SK-N-SH (cell line): ENCODE measurements at regions of chr1 and their contacts with region 1.

Region 1: GRCh38 chr1:20212685-20213331 is 26.5 kb upstream of the PLA2G2C start:
- DNase-seq: peak; percentile 82
- H3K4me3 ChIP-seq: no peak overlapping the region; a peak in 1 of 4 replicates
- H3K27ac ChIP-seq: no peak overlapping the region
- H3K4me1 ChIP-seq: peaks cover 0 to 11% of the 10 kb centered on the region in 2 experiments; a peak in 1 of 4 replicates
- H3K27me3 ChIP-seq: peaks cover 24% of the 10 kb centered on the region
- CTCF ChIP-seq: peak; percentile 84
- EP300 ChIP-seq: no peak
- RAD21 ChIP-seq: peak; percentile 82

Region 2: GRCh38 chr1:20051218-20051829 is 161.5 kb before region 1 on chr1:
- CTCF ChIA-PET with region 1: no interaction called
- POLR2A ChIA-PET with region 1: no interaction called
- DNase-seq: no peak
- H3K4me3 ChIP-seq: no peak overlapping the region
- H3K27ac ChIP-seq: no peak overlapping the region
- H3K4me1 ChIP-seq: no peaks in the 10 kb centered on the region
- H3K27me3 ChIP-seq: no peaks in the 10 kb centered on the region
- CTCF ChIP-seq: no peak
- EP300 ChIP-seq: no peak
- RAD21 ChIP-seq: no peak

Region 3: GRCh38 chr1:20194757-20195461 is 17.9 kb before region 1 on chr1:
- CTCF ChIA-PET with region 1: interaction called, 21 read pairs
- POLR2A ChIA-PET with region 1: no interaction called
- DNase-seq: peak; percentile 57
- H3K4me3 ChIP-seq: peak overlapping the region in 1 of 2 experiments; percentile 49; a peak in 1 of 4 replicates
- H3K27ac ChIP-seq: no peak overlapping the region
- H3K4me1 ChIP-seq: no peaks in the 10 kb centered on the region; a peak in 1 of 4 replicates
- H3K27me3 ChIP-seq: peaks cover 12% of the 10 kb centered on the region; the same call in 1 of the 2 replicates
- CTCF ChIP-seq: peak; percentile 69
- EP300 ChIP-seq: no peak
- RAD21 ChIP-seq: peak; percentile 45

Region 4: GRCh38 chr1:20233394-20233793 is 20.6 kb after region 1 on chr1:
- CTCF ChIA-PET with region 1: interaction called, 23 read pairs
- POLR2A ChIA-PET with region 1: no interaction called
- DNase-seq: peak; percentile 55
- H3K4me3 ChIP-seq: no peak overlapping the region
- H3K27ac ChIP-seq: no peak overlapping the region
- H3K4me1 ChIP-seq: peaks cover 0 to 13% of the 10 kb centered on the region in 2 experiments; a peak in 2 of 4 replicates
- H3K27me3 ChIP-seq: peaks cover 12% of the 10 kb centered on the region; the same call in 1 of the 2 replicates
- CTCF ChIP-seq: peak; percentile 52
- EP300 ChIP-seq: no peak
- RAD21 ChIP-seq: peak; percentile 55

Region 5: DNA sequence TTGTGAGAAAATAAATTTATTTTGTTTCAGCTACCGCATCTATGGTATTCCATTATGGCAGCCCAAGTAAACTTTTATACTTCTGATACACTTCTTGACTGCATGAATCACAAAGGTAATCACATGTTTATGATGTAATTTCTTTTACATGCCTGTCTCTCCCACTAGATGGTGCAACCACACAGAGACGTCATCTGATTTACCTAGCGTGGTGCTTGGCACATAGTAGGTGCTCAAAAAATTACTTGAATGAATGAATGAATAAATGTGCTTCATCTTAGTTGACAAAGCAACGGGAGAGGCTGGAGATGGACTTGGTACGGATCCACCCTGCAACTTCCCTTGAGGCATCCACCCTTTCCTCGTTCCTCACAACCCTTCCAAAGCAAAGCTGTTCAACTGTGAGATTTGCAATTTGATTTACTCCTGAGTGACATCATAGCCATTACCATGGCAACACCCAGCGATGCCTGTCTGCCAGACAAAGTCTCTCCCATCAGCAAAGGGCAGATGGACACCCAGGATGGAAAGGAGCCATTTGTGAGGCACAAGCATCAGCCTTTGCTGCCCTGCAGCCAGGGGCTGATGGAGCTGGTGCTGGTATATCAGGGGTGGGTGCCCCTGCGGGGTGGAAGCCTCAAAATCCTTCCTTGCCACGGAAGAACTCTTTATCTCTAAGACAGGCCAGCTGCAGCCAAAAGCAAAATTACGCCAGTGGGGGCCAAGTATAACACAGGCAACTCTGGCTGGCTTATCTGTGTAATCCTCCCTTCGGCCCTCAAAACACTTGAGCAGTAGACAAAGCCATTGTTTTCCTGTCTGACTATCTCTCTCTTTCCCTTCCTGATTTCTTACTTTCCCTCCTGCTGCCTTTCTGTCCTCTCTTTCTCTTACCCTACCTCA is 58.9 kb after region 1 on chr1:
- CTCF ChIA-PET with region 1: interaction called, 16 read pairs
- POLR2A ChIA-PET with region 1: no interaction called
- DNase-seq: peak; percentile 70
- H3K4me3 ChIP-seq: no peak overlapping the region
- H3K27ac ChIP-seq: peak overlapping the region in 1 of 2 experiments; percentile 84; a peak in 2 of 4 replicates
- H3K4me1 ChIP-seq: peaks cover 0 to 23% of the 10 kb centered on the region in 2 experiments; a peak in 2 of 4 replicates
- H3K27me3 ChIP-seq: no peaks in the 10 kb centered on the region; the same call in 1 of the 2 replicates
- CTCF ChIP-seq: no peak
- EP300 ChIP-seq: no peak
- RAD21 ChIP-seq: peak; percentile 44

Region 6: GRCh38 chr1:20361806-20362640 is 149.2 kb after region 1 on chr1:
- CTCF ChIA-PET with region 1: interaction called, 42 read pairs
- POLR2A ChIA-PET with region 1: no interaction called
- DNase-seq: peak; percentile 79
- H3K4me3 ChIP-seq: no peak overlapping the region; a peak in 1 of 4 replicates
- H3K27ac ChIP-seq: no peak overlapping the region
- H3K4me1 ChIP-seq: peaks cover 0 to 19% of the 10 kb centered on the region in 2 experiments; a peak in 2 of 4 replicates
- H3K27me3 ChIP-seq: peaks cover 27% of the 10 kb centered on the region
- CTCF ChIP-seq: peak; percentile 70
- EP300 ChIP-seq: no peak
- RAD21 ChIP-seq: peak; percentile 77

Region 7: GRCh38 chr1:20423169-20423795 is 210.5 kb after region 1 on chr1:
- CTCF ChIA-PET with region 1: interaction called, 101 read pairs
- POLR2A ChIA-PET with region 1: no interaction called
- DNase-seq: no peak
- H3K4me3 ChIP-seq: no peak overlapping the region
- H3K27ac ChIP-seq: no peak overlapping the region
- H3K4me1 ChIP-seq: no peaks in the 10 kb centered on the region; a peak in 1 of 4 replicates
- H3K27me3 ChIP-seq: no peaks in the 10 kb centered on the region
- CTCF ChIP-seq: no peak
- EP300 ChIP-seq: no peak
- RAD21 ChIP-seq: no peak

Region 8: DNA sequence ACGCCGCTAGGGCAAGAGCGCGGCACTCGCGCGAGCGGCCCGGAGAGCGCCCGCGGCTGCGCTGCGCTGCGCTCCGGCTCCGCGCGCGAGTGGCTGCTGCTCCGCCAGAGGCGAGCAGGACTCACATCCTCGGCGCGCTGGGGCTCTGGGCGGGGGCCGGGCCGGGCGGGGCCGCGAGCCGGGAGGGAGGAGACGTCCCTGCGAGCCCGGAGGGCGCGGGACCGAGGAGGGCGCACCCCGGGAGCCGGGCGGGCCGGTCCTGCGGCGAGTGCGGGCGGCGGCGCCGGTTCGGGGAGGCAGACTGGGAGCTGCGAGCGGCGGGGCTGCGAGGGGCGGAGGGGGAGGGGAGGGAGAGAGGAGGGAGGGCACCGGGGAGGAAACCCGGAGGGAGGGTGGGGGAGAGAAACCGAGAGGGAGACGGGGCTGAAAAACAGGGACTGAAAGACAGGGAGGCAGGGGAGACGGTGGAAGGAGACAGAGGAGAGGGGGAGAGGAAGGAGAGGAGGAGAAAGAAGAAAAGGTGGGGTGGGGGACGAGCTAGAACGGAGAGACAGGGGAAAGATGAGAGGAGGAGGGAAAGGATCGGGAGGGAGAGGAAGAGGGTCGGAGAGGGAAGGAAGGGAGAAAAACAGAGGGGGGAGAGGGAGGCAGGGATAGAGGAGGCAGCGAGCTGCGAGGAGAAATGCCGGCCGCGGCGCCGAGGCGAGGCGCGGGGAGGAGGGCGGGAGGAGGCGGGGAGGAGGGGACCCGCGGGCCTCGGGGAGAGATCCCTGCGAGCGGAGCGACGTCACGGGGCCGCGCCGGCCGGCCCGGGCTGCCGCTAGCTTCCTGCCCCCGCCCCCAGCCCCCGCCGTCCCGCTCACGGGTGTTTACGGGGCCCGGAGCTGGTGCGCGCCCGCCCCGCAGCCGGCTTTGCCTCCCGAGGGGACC is 273.0 kb after region 1 on chr1 and contains the start of gene CAMK2N1:
- CTCF ChIA-PET with region 1: interaction called, 286 read pairs
- POLR2A ChIA-PET with region 1: no interaction called
- DNase-seq: peak; percentile 89
- H3K4me3 ChIP-seq: peak within 1 kb of the TSS; percentile 68 to 74
- H3K27ac ChIP-seq: peak within 1 kb of the TSS; percentile 56 to 88
- H3K4me1 ChIP-seq: peaks cover 0 to 25% of the 10 kb centered on the region in 2 experiments; a peak in 2 of 4 replicates
- H3K27me3 ChIP-seq: 0 out of 2 replicates have a peak, but pooled peaks cover 3% of the 10 kb centered on the region
- CTCF ChIP-seq: no peak
- EP300 ChIP-seq: no peak
- RAD21 ChIP-seq: no peak
- polyA plus RNA-seq, gene CAMK2N1: 2.8 and 5.3 TPM in 2 replicates